Activated T-helper 1 cell treated with anti-CD3 and anti-CD28 coated beads, Interleukin-12 subunit alpha, Interleukin-12 subunit beta, Interleukin-2, Interleukin-4 antibody, amounts not matched to agents 30 ng/mL and 10 ng/mL and 1 ng/mL, durations not matched to agents 14 hours and 24 hours and 36 hours (primary cell): ENCODE measurements at regions of chr4 and their contacts with region 1.

Region 1: GRCh38 chr4:83034630-83035494 is at the start of gene COPS4:
- DNase-seq: peak; percentile 95
- H3K4me3 Mint-ChIP-seq: peak within 1 kb of the TSS; percentile 98
- H3K27ac Mint-ChIP-seq: peak within 1 kb of the TSS; percentile 99
- H3K4me1 Mint-ChIP-seq: peaks cover 20% of the 10 kb centered on the region
- H3K27me3 Mint-ChIP-seq: peaks cover 6% of the 10 kb centered on the region
- total RNA-seq, gene COPS4: 35.8 and 38.8 TPM in 2 replicates

Region 2: DNA sequence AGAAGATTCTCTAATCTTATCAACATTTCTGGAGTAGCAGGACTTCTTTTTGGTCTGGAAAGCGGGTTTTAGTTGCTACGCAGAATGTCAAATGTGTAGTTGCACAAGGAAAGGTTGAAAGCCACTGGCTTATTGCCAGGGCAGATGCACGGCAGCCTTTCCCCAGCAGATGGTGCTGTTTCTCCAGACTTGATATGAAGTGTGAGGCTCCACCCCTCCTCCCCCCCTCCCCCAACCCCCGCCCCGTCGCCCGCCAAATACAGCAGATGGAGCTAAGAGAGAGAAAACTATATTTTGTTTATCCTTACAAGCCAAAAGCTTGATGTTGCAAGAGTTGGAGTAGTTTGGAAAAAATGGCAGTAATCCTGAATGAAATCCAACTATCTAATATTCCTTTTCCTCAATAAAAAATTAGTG is 572.4 kb before region 1 on chr4:
- intact Hi-C with region 1: loop called (anchors 10 kb)
- DNase-seq: peak; percentile 65
- H3K4me3 Mint-ChIP-seq: no peak overlapping the region
- H3K27ac Mint-ChIP-seq: no peak overlapping the region
- H3K4me1 Mint-ChIP-seq: peaks cover 5% of the 10 kb centered on the region
- H3K27me3 Mint-ChIP-seq: no peaks in the 10 kb centered on the region

Region 3: GRCh38 chr4:82865592-82865991 is 169.3 kb before region 1 on chr4:
- intact Hi-C with region 1: loop called (anchors 1 kb)
- DNase-seq: peak; percentile 24
- H3K4me3 Mint-ChIP-seq: no peak overlapping the region
- H3K27ac Mint-ChIP-seq: peak overlapping the region; percentile 91
- H3K4me1 Mint-ChIP-seq: peaks cover 48% of the 10 kb centered on the region
- H3K27me3 Mint-ChIP-seq: no peaks in the 10 kb centered on the region

Region 4: DNA sequence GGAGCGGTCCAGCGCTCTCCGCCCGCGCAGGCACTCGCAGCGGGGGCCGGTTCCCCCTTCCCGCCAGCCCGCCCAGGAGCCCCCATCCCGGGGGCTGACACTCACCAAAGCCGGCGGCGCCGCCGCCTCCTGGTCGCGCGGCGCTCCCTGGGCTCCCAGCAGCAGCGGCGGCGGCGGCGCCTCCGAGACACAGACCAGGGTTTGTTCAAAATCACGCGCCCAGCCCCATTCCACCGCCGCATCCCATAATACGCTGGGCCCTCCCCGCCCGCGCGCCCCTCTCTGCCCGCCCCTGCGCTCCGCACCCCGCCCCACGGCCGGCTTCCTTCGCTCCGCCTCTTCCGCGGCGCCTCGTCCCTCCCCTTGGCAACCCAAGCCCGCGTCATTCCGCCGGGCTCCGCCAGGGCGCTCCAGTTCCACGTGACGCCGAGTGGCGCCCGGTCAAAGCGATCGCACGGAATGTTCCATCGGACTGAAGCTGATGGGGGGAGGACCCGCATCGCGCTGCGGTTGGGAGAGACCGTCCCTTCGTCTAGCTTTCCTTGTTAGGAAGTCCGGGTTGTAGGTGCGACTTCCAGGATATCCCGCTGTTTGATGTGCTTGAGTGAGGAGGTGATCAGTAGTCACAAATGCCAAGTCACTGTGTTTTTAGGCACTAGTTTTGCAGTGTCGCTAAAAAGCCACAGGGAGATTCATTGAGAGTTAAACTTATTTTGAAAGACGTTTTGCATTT is 22.0 kb before region 1 on chr4:
- intact Hi-C with region 1: loop called (anchors 1 kb)
- DNase-seq: peak; percentile 97
- H3K4me3 Mint-ChIP-seq: peak overlapping the region; percentile 91
- H3K27ac Mint-ChIP-seq: peak overlapping the region; percentile 92
- H3K4me1 Mint-ChIP-seq: peaks cover 45% of the 10 kb centered on the region
- H3K27me3 Mint-ChIP-seq: no peaks in the 10 kb centered on the region

Region 5: GRCh38 chr4:83150653-83151330 is 115.9 kb after region 1 on chr4:
- intact Hi-C with region 1: no loop called
- DNase-seq: no peak
- H3K4me3 Mint-ChIP-seq: no peak overlapping the region
- H3K27ac Mint-ChIP-seq: no peak overlapping the region
- H3K4me1 Mint-ChIP-seq: peaks cover 22% of the 10 kb centered on the region
- H3K27me3 Mint-ChIP-seq: peaks cover 5% of the 10 kb centered on the region

Region 6: GRCh38 chr4:83231620-83232076 is 196.8 kb after region 1 on chr4:
- intact Hi-C with region 1: loop called (anchors 1 kb)
- DNase-seq: peak; percentile 63
- H3K4me3 Mint-ChIP-seq: peak overlapping the region; percentile 52
- H3K27ac Mint-ChIP-seq: peak overlapping the region; percentile 69
- H3K4me1 Mint-ChIP-seq: peaks cover 59% of the 10 kb centered on the region
- H3K27me3 Mint-ChIP-seq: peaks cover 11% of the 10 kb centered on the region